ENCODE measurements at regions of chr3 and their contacts with region 1.

Region 1: DNA sequence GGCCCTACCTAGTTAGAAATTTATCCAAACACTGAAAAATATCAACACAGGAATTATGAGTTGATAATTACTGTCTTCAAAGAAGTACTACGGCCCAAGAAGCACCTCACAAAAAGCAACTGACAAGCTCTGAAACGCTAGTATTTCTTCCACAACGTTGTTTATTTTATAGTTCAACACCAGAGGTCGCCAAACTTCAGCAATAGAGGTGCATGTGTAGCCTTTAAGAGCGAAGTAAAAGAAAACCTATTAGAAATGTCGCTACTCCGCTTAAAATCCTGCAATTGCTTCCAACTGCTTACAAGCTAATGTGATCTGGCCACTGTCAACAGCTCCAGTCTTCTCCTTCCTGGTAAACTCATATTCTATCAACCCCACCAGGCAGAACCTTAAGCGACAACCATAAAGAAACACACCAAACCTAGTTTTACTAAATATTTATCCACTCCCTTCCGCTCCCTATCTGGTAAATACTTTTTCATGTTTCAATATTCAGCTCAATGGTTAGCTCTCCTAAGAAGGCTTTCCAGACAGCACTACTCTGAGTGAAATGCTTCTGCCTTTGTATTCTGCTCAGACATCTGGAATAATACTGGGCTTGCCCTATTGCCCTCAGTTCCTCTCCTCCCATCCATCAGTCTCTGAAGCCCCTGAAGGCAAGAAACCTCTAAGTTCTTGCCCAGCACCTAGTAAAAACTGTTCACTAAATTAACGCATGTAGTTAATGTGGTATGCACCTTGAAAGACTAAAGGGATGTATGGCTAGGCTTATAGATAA is 110.2 kb downstream of the NR1I2 start:
- DNase-seq: peak in 7 of 9 donors; percentile 38 to 68 (median 60)
- ATAC-seq: peak; percentile 78
- H3K4me3 ChIP-seq: no peak overlapping the region
- H3K4me3 Mint-ChIP-seq: peak overlapping the region in 1 of 10 donors; percentile 8
- H3K27ac ChIP-seq: no peak overlapping the region
- H3K27ac Mint-ChIP-seq: peak overlapping the region in 2 of 9 donors; percentile 28 to 39
- H3K4me1 ChIP-seq: no peaks in the 10 kb centered on the region
- H3K4me1 Mint-ChIP-seq: peaks cover 2 to 19% (median 11%) of the 10 kb centered on the region in 7 donors
- H3K27me3 ChIP-seq: no peaks in the 10 kb centered on the region
- H3K27me3 Mint-ChIP-seq: no peaks in the 10 kb centered on the region

Region 2: GRCh38 chr3:120147072-120147871 is 255.1 kb after region 1 on chr3:
- CTCF ChIA-PET with region 1: interaction called, 85 read pairs
- POLR2A ChIA-PET with region 1: interaction called, 4 read pairs
- intact Hi-C with region 1: loop called (anchors 1 kb)
- DNase-seq: peak in 7 of 9 donors; percentile 48 to 78 (median 65)
- ATAC-seq: peak; percentile 91
- H3K4me3 ChIP-seq: no peak overlapping the region
- H3K4me3 Mint-ChIP-seq: no peak overlapping the region
- H3K27ac ChIP-seq: no peak overlapping the region
- H3K27ac Mint-ChIP-seq: peak overlapping the region in 6 of 9 donors; percentile 1 to 61 (median 38)
- H3K4me1 ChIP-seq: no peaks in the 10 kb centered on the region
- H3K4me1 Mint-ChIP-seq: peaks cover 9 to 33% (median 22%) of the 10 kb centered on the region in 7 donors
- H3K27me3 ChIP-seq: no peaks in the 10 kb centered on the region
- H3K27me3 Mint-ChIP-seq: peaks cover 0 to 3% (median 0%) of the 10 kb centered on the region in 5 donors

Region 3: DNA sequence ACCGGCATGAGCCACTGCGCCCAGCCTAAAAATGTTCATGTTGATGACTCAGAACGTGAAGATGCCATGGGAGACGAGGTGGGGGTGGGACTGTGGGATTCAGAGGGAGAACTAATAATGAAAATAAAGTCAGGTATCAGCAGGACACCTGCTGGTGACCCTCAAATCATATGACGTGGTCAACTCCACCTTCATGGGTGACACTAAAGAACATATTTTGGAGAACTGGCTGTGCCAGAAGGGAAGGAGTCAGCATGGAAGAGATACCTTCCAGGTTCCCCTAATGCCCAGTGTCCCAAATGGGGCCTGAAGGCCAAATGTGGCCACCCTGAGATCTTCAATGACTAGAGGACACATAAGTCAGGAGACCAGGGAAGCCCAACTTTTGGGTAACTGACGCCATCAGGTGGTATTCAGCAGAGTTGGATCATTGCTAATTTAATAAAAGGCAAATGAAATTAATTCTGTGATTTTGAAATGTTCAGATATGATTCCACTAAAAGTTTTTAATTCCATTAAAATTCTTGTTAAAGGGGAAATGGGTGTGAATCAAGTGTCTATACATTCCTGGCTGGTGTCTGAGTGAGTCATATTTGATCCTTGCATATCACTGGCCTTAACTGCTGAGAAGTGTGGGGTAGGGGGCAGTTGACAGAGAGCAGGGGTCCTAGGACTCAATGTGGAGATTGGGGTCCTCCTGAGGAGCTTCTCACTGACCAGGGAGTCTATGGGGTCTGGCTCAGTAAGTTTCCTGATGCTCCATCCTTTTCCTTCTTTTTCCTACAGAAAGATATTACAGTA is 290.8 kb after region 1 on chr3:
- CTCF ChIA-PET with region 1: interaction called, 4 read pairs
- POLR2A ChIA-PET with region 1: no interaction called
- intact Hi-C with region 1: loop called (anchors 1 kb)
- DNase-seq: no peak
- ATAC-seq: no peak
- H3K4me3 ChIP-seq: no peak overlapping the region
- H3K4me3 Mint-ChIP-seq: no peak overlapping the region
- H3K27ac ChIP-seq: no peak overlapping the region
- H3K27ac Mint-ChIP-seq: no peak overlapping the region
- H3K4me1 ChIP-seq: no peaks in the 10 kb centered on the region
- H3K4me1 Mint-ChIP-seq: no peaks in the 10 kb centered on the region
- H3K27me3 ChIP-seq: no peaks in the 10 kb centered on the region
- H3K27me3 Mint-ChIP-seq: peaks cover 11 to 17% (median 15%) of the 10 kb centered on the region in 5 donors

Region 4: GRCh38 chr3:120198305-120198878 is 306.3 kb after region 1 on chr3:
- CTCF ChIA-PET with region 1: interaction called, 5 read pairs
- POLR2A ChIA-PET with region 1: no interaction called
- intact Hi-C with region 1: loop called in 1 of 2 experiments (anchors 1 kb)
- DNase-seq: no peak
- ATAC-seq: no peak
- H3K4me3 ChIP-seq: no peak overlapping the region
- H3K4me3 Mint-ChIP-seq: no peak overlapping the region
- H3K27ac ChIP-seq: no peak overlapping the region
- H3K27ac Mint-ChIP-seq: no peak overlapping the region
- H3K4me1 ChIP-seq: no peaks in the 10 kb centered on the region
- H3K4me1 Mint-ChIP-seq: no peaks in the 10 kb centered on the region
- H3K27me3 ChIP-seq: no peaks in the 10 kb centered on the region
- H3K27me3 Mint-ChIP-seq: no peaks in the 10 kb centered on the region

Region 5: GRCh38 chr3:120245386-120245785 is 353.3 kb after region 1 on chr3:
- CTCF ChIA-PET with region 1: no interaction called
- POLR2A ChIA-PET with region 1: no interaction called
- intact Hi-C with region 1: loop called (anchors 1 to 2 kb)
- DNase-seq: no peak
- ATAC-seq: no peak
- H3K4me3 ChIP-seq: no peak overlapping the region
- H3K4me3 Mint-ChIP-seq: no peak overlapping the region
- H3K27ac ChIP-seq: no peak overlapping the region
- H3K27ac Mint-ChIP-seq: no peak overlapping the region
- H3K4me1 ChIP-seq: no peaks in the 10 kb centered on the region
- H3K4me1 Mint-ChIP-seq: no peaks in the 10 kb centered on the region
- H3K27me3 ChIP-seq: no peaks in the 10 kb centered on the region
- H3K27me3 Mint-ChIP-seq: peaks cover 21 to 38% (median 25%) of the 10 kb centered on the region in 5 donors

Region 6: GRCh38 chr3:120558771-120559241 is 666.7 kb after region 1 on chr3:
- CTCF ChIA-PET with region 1: interaction called, 4 read pairs
- POLR2A ChIA-PET with region 1: no interaction called
- intact Hi-C with region 1: loop called (anchors 1 kb)
- DNase-seq: peak; percentile 80 to 89 (median 88)
- ATAC-seq: peak; percentile 97
- H3K4me3 ChIP-seq: peak overlapping the region; percentile 61
- H3K4me3 Mint-ChIP-seq: peak overlapping the region; percentile 75 to 87 (median 82)
- H3K27ac ChIP-seq: peak overlapping the region; percentile 58
- H3K27ac Mint-ChIP-seq: peak overlapping the region; percentile 54 to 91 (median 83)
- H3K4me1 ChIP-seq: peaks cover 6% of the 10 kb centered on the region in 2 donors
- H3K4me1 Mint-ChIP-seq: peaks cover 6 to 23% (median 16%) of the 10 kb centered on the region in 7 donors
- H3K27me3 ChIP-seq: peaks cover 0 to 4% of the 10 kb centered on the region in 2 donors
- H3K27me3 Mint-ChIP-seq: peaks cover 0 to 13% (median 7%) of the 10 kb centered on the region in 5 donors

Measured in naive thymus-derived CD4-positive, alpha-beta T cell (primary cell).